PC-9 (cell line): ENCODE measurements at regions of chr12 and their contacts with region 1.

Region 1: GRCh38 chr12:20620261-20620660 is 74.9 kb upstream of the SLCO1C1 start:
- DNase-seq: no peak
- H3K4me3 ChIP-seq: no peak overlapping the region
- H3K27ac ChIP-seq: no peak overlapping the region
- H3K4me1 ChIP-seq: no peaks in the 10 kb centered on the region
- H3K27me3 ChIP-seq: no peaks in the 10 kb centered on the region
- CTCF ChIP-seq: no peak

Region 2: GRCh38 chr12:20463913-20464524 is 156.2 kb before region 1 on chr12:
- CTCF ChIA-PET with region 1: no interaction called
- POLR2A ChIA-PET with region 1: no interaction called
- intact Hi-C with region 1: no loop called
- DNase-seq: no peak
- H3K4me3 ChIP-seq: no peak overlapping the region
- H3K27ac ChIP-seq: no peak overlapping the region
- H3K4me1 ChIP-seq: no peaks in the 10 kb centered on the region
- H3K27me3 ChIP-seq: no peaks in the 10 kb centered on the region
- CTCF ChIP-seq: peak; percentile 68

Region 3: GRCh38 chr12:20716037-20716436 is 95.8 kb after region 1 on chr12:
- CTCF ChIA-PET with region 1: no interaction called
- POLR2A ChIA-PET with region 1: interaction called, 12 read pairs
- intact Hi-C with region 1: no loop called
- DNase-seq: no peak
- H3K4me3 ChIP-seq: no peak overlapping the region
- H3K27ac ChIP-seq: no peak overlapping the region
- H3K4me1 ChIP-seq: no peaks in the 10 kb centered on the region
- H3K27me3 ChIP-seq: no peaks in the 10 kb centered on the region
- CTCF ChIP-seq: 0 out of 2 replicates have a peak, but pooled peaks have one; percentile 24